ENCODE measurements at regions of chr19 and their contacts with region 1.

Region 1: DNA sequence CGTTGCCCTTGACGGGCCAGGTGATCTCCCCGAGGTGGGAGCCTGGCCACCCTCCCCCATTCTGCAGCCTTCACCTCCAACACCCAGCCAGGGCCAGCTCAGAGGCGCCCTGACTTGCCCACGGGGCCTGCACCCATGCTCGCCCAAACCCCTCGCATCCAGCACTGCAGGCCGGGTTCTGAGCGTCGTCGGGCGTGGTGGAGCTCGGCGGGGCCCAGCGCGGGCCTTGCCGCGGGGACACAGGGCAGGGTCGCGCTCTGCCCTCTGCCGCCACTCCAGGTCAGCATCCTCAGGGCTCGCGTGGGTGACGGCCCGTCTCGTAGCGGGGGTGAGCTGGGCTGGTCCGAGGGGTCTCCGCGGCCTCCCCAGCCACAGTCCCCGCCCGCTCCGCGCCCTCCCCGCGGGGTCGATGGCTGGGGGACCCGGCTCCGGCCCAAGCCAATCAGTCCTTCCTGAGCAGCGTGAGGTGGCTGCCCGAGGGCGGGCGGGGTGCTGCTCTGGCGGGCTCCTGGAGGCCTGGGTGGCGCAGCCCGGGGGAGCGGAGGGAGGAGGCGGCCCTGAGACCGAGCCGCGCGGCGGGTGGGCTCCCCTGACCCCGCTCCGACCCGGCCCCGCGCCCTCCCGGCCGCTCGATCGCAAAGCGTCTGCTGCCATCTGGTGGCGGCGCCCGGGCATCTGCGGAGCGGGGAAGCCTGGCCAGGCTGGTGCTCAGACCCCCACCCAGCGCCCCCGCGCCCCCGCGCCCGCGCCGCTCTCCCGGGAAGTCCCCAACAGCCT is 61.4 kb downstream of the CCNE1 start:
- DNase-seq: no peak
- H3K4me3 ChIP-seq: peak overlapping the region; percentile 38
- H3K27me3 ChIP-seq: 0 out of 2 replicates have a peak, but pooled peaks cover 2% of the 10 kb centered on the region
- CTCF ChIP-seq: peak; percentile 50

Region 2: GRCh38 chr19:29731331-29731850 is 141.8 kb before region 1 on chr19:
- CTCF ChIA-PET with region 1: interaction called, 25 read pairs
- POLR2A ChIA-PET with region 1: no interaction called
- DNase-seq: no peak
- H3K4me3 ChIP-seq: no peak overlapping the region
- H3K27me3 ChIP-seq: peaks cover 4% of the 10 kb centered on the region
- CTCF ChIP-seq: no peak

Region 3: DNA sequence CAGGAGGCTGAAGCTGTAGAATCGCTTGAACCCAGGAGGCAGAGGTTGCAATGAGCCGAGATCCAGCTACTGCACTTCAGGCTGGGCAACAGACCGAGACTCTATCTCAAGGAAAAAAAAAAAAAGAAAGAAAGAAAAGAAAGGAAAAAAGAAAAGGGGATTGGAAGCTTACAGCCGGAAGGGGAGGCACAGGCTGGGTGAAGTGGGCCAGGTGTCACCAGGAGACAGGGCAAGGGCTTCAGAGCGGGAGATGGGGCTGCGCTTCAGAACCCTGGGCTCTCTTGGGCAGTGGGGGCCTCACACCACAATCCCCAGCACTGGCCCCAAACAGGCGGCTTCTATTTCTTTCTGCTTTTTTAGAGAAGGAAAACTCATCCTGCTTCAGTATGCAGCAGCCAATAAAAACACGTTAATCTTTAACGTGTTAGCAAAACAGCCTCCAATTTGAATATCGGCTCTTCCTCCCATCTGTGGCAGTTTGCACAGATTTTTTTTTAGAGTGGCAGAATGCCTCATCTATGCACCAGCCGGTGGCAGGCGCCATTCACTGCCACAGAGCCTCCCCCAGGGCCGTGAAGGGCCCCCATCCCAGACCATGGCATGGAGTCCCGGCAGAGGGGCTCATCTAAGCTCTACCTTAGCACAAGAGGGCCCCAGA is 111.5 kb before region 1 on chr19:
- CTCF ChIA-PET with region 1: interaction called, 48 read pairs
- POLR2A ChIA-PET with region 1: no interaction called
- DNase-seq: no peak
- H3K4me3 ChIP-seq: no peak overlapping the region
- H3K27me3 ChIP-seq: no peaks in the 10 kb centered on the region; the same call in 1 of the 2 replicates
- CTCF ChIP-seq: no peak

Region 4: DNA sequence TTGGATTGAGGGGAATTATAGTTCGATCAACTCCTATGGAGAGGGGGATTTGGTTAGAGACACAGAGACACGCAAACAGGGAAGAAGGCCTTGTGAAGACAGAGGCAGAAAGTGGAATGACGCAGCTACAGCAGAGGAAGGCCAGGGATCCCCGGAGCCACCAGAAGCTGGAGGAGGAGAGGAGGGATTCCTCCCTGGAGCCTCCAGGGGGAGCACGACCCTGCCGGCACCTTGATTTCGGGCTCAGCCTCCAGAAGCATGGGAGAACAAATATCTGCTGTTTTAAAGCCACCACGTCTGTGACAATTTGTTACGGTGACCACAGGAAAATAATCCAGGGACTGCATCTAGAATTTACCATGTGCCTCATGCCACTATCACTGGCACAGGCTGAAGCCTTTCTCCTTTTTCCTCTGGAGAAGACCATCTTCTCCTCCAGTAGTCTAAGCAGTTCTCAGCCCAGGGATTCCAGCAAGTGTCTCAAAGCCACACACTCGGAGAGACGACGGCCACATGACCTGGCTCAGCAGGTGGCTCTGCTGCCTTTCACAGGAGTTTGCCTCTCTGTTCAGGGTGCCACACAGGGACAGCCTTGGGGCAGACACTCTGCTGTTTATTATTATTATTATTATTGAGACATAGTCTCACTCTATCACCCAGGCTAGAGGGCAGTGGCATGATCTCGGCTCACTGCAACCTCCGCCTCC is 101.4 kb before region 1 on chr19:
- CTCF ChIA-PET with region 1: interaction called, 69 read pairs
- POLR2A ChIA-PET with region 1: no interaction called
- DNase-seq: no peak
- H3K4me3 ChIP-seq: no peak overlapping the region
- H3K27me3 ChIP-seq: no peaks in the 10 kb centered on the region; the same call in 1 of the 2 replicates
- CTCF ChIP-seq: peak; percentile 91

Region 5: DNA sequence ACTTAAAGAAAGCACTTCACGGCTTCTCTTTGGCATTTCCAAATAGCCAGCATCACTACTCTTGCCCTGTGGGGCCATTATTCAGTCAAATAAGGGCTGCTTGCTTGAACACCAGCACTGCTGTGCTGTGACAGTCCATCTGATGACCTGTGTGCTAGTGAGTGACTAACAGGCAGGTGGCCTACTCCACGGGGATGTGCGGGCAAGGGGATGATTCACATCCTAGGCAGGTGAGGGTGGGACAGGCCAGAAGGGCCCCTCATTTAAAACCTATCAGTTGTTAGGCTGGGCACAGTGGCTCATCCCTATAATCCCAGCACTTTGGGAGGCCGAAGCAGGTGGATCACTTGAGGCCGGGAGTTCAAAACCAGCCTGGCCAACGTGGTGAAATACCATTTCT is 53.2 kb before region 1 on chr19:
- CTCF ChIA-PET with region 1: no interaction called
- POLR2A ChIA-PET with region 1: no interaction called
- DNase-seq: no peak
- H3K4me3 ChIP-seq: no peak overlapping the region
- H3K27me3 ChIP-seq: no peaks in the 10 kb centered on the region
- CTCF ChIP-seq: no peak

Region 6: GRCh38 chr19:31761281-31761913 is 1888.2 kb after region 1 on chr19:
- CTCF ChIA-PET with region 1: no interaction called
- POLR2A ChIA-PET with region 1: interaction called, 12 read pairs
- DNase-seq: no peak
- H3K4me3 ChIP-seq: no peak overlapping the region
- H3K27me3 ChIP-seq: no peaks in the 10 kb centered on the region
- CTCF ChIP-seq: no peak